ENCODE measurements at regions of chr5 and their contacts with region 1.

Region 1: GRCh38 chr5:175857986-175858385 is 13.4 kb upstream of the CPLX2 start:
- DNase-seq: no peak
- H3K4me3 Mint-ChIP-seq: no peak overlapping the region
- H3K27ac Mint-ChIP-seq: no peak overlapping the region
- H3K4me1 Mint-ChIP-seq: no peaks in the 10 kb centered on the region
- H3K27me3 Mint-ChIP-seq: peaks cover 5% of the 10 kb centered on the region

Region 2: GRCh38 chr5:175829813-175830585 is 28.0 kb before region 1 on chr5:
- CTCF ChIA-PET with region 1: no interaction called
- intact Hi-C with region 1: no loop called
- DNase-seq: no peak
- H3K4me3 Mint-ChIP-seq: no peak overlapping the region
- H3K27ac Mint-ChIP-seq: no peak overlapping the region
- H3K4me1 Mint-ChIP-seq: no peaks in the 10 kb centered on the region
- H3K27me3 Mint-ChIP-seq: no peaks in the 10 kb centered on the region

Region 3: GRCh38 chr5:175844174-175844573 is 13.8 kb before region 1 on chr5:
- CTCF ChIA-PET with region 1: no interaction called
- intact Hi-C with region 1: loop called (anchors 1 kb)
- DNase-seq: no peak
- H3K4me3 Mint-ChIP-seq: no peak overlapping the region
- H3K27ac Mint-ChIP-seq: no peak overlapping the region
- H3K4me1 Mint-ChIP-seq: no peaks in the 10 kb centered on the region
- H3K27me3 Mint-ChIP-seq: peaks cover 2% of the 10 kb centered on the region

Measured in activated naive CD4-positive, alpha-beta T cell treated with anti-CD3 and anti-CD28 coated beads for 36 hours (primary cell).